ENCODE measurements at regions of chr7 and their contacts with region 1.

Region 1: GRCh38 chr7:96709381-96710228 is at the start of gene SEM1:
- DNase-seq: peak; percentile 78
- ATAC-seq: peak; percentile 99
- H3K4me3 ChIP-seq: peak within 1 kb of the TSS; percentile 85 to 91 (median 90)
- H3K27ac ChIP-seq: peak within 1 kb of the TSS; percentile 88
- H3K4me1 ChIP-seq: peaks cover 34% of the 10 kb centered on the region
- H3K27me3 ChIP-seq: no peaks in the 10 kb centered on the region; a peak in 1 of 5 replicates
- CTCF ChIP-seq: no peak
- EP300 ChIP-seq: no peak
- POLR2A ChIP-seq: peak; percentile 82 to 85
- RAD21 ChIP-seq: peak; percentile 27; the same call in 1 of the 2 replicates
- total RNA-seq, gene SEM1: 174 and 239 TPM in 2 replicates

Region 2: GRCh38 chr7:96075510-96076349 is 633.9 kb before region 1 on chr7:
- CTCF ChIA-PET with region 1: no interaction called
- POLR2A ChIA-PET with region 1: no interaction called
- in situ Hi-C with region 1: no loop called
- intact Hi-C with region 1: loop called (anchors 5 kb)
- DNase-seq: peak; percentile 55
- ATAC-seq: peak; percentile 99
- H3K4me3 ChIP-seq: peak overlapping the region; percentile 53 to 56 (median 56)
- H3K27ac ChIP-seq: no peak overlapping the region
- H3K4me1 ChIP-seq: peaks cover 7% of the 10 kb centered on the region
- H3K27me3 ChIP-seq: peaks cover 3 to 14% of the 10 kb centered on the region in 2 experiments; a peak in 3 of 5 replicates
- CTCF ChIP-seq: peak; percentile 91
- EP300 ChIP-seq: no peak
- POLR2A ChIP-seq: no peak
- RAD21 ChIP-seq: peak; percentile 90

Region 3: GRCh38 chr7:96253441-96253840 is 456.2 kb before region 1 on chr7:
- CTCF ChIA-PET with region 1: no interaction called
- POLR2A ChIA-PET with region 1: no interaction called
- in situ Hi-C with region 1: no loop called
- intact Hi-C with region 1: no loop called
- DNase-seq: no peak
- ATAC-seq: no peak; the same call in 1 of the 3 replicates
- H3K4me3 ChIP-seq: no peak overlapping the region
- H3K27ac ChIP-seq: no peak overlapping the region
- H3K4me1 ChIP-seq: peaks cover 33% of the 10 kb centered on the region
- H3K27me3 ChIP-seq: no peaks in the 10 kb centered on the region
- CTCF ChIP-seq: no peak
- EP300 ChIP-seq: no peak
- POLR2A ChIP-seq: no peak
- RAD21 ChIP-seq: no peak

Region 4: GRCh38 chr7:96800824-96801223 is 91.2 kb after region 1 on chr7:
- CTCF ChIA-PET with region 1: no interaction called
- POLR2A ChIA-PET with region 1: no interaction called
- in situ Hi-C with region 1: no loop called
- intact Hi-C with region 1: loop called (anchors 10 kb)
- DNase-seq: peak; percentile 81
- ATAC-seq: peak; percentile 93
- H3K4me3 ChIP-seq: no peak overlapping the region
- H3K27ac ChIP-seq: no peak overlapping the region
- H3K4me1 ChIP-seq: peaks cover 22% of the 10 kb centered on the region
- H3K27me3 ChIP-seq: 0 out of 5 replicates have a peak, but pooled peaks cover 0 to 2% of the 10 kb centered on the region in 2 experiments
- CTCF ChIP-seq: peak; percentile 56
- EP300 ChIP-seq: peak; percentile 62 to 74; a peak in 2 of 4 replicates
- POLR2A ChIP-seq: no peak
- RAD21 ChIP-seq: no peak

Region 5: DNA sequence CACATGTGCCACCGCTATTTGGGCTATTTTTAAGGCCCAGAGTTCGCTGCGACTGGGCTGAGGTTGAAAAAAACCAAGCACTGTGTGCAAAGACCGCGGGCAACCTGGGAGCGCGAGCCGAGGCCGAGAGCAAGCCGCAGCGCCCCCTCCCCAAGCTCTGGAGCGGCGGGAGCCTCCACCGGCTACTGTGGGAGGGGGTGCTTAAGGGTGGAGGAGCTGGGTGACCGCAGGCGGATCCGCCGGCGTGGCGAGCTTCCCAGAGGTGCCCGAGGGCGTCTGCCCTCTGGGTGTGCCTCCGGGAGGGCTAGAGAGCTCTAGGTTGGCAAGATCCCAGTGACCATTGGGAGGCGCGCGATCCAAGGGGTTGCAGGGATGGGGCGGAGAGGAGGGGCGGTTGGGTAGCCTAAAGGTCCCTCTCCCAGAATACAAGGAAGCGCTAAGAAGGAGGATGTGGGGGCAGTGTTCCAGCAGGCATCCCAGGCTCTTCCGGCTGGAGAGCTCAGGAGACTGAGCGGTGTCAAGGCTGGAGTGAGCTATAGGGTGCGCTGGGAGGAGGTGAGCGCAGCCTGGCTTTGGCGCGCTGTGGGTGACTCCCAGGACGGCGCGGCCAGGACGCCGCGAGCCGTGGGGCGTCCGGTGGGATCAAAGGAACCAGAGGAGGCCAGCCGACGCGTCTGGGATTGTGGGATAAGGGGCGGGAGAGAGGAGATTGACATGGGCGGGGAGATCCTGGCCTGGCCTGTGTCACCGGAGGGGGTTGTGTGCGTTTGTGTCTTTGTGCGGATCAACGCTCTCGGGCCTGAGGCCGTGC is 307.0 kb after region 1 on chr7:
- CTCF ChIA-PET with region 1: no interaction called
- POLR2A ChIA-PET with region 1: no interaction called
- in situ Hi-C with region 1: no loop called
- intact Hi-C with region 1: loop called (anchors 5 kb)
- DNase-seq: peak; percentile 76
- ATAC-seq: peak; percentile 90
- H3K4me3 ChIP-seq: peak overlapping the region; percentile 77 to 83 (median 79)
- H3K27ac ChIP-seq: peak overlapping the region; percentile 79
- H3K4me1 ChIP-seq: peaks cover 26% of the 10 kb centered on the region
- H3K27me3 ChIP-seq: no peaks in the 10 kb centered on the region
- CTCF ChIP-seq: peak; percentile 75
- EP300 ChIP-seq: no peak
- POLR2A ChIP-seq: peak; percentile 56 to 82; a peak in 3 of 4 replicates
- RAD21 ChIP-seq: peak; percentile 46; the same call in 1 of the 2 replicates